CD14-positive monocyte (primary cell): ENCODE measurements at regions of chr9 and their contacts with region 1.

Region 1: DNA sequence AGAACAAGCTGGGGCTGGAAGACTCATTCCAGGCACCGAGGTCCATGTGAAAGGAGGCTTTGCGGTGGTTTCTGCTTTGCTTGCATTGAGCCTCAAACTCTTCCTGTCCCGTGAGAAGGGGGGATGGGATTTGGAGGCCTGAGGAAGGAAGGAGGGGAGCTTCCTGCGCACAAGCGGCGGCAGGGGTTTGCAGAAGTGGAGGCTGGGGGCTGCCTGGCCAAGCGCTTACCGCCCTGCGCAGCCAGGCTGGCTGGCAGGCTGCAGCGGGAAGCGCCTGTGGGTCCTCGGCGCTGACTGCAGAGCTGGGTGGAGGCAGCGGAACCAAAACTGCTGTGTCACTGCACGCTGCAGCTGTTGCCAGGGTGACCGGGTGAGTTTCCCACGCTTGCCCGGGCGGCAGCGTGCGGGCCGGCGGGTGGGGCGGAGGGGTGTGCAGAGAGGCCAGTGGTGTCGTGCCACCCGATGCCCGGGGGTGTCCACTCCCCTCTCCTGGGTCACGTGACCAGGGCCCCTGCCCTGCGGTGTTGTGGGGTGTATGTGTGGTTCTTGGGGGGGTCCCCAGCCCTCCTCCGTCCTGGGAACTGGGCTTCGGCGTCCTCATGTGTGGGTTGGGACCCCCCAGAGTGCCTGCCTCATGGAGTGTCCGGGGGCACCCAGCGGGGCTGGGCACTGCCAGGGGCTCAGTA is 81.0 kb downstream of the RXRA start:
- DNase-seq: peak; percentile 98 to 99 (median 98)
- H3K4me3 ChIP-seq: peak overlapping the region in 2 of 3 experiments; percentile 22 to 68
- H3K4me3 Mint-ChIP-seq: peak overlapping the region; percentile 69 to 85
- H3K27ac ChIP-seq: peak overlapping the region; percentile 97
- H3K27ac Mint-ChIP-seq: peak overlapping the region; percentile 90 to 100 (median 100)
- H3K4me1 ChIP-seq: peaks cover 99 to 100% of the 10 kb centered on the region in 2 donors
- H3K4me1 Mint-ChIP-seq: peaks cover 94% of the 10 kb centered on the region
- H3K27me3 ChIP-seq: no peaks in the 10 kb centered on the region
- H3K27me3 Mint-ChIP-seq: no peaks in the 10 kb centered on the region
- CTCF ChIP-seq: no peak

Region 2: DNA sequence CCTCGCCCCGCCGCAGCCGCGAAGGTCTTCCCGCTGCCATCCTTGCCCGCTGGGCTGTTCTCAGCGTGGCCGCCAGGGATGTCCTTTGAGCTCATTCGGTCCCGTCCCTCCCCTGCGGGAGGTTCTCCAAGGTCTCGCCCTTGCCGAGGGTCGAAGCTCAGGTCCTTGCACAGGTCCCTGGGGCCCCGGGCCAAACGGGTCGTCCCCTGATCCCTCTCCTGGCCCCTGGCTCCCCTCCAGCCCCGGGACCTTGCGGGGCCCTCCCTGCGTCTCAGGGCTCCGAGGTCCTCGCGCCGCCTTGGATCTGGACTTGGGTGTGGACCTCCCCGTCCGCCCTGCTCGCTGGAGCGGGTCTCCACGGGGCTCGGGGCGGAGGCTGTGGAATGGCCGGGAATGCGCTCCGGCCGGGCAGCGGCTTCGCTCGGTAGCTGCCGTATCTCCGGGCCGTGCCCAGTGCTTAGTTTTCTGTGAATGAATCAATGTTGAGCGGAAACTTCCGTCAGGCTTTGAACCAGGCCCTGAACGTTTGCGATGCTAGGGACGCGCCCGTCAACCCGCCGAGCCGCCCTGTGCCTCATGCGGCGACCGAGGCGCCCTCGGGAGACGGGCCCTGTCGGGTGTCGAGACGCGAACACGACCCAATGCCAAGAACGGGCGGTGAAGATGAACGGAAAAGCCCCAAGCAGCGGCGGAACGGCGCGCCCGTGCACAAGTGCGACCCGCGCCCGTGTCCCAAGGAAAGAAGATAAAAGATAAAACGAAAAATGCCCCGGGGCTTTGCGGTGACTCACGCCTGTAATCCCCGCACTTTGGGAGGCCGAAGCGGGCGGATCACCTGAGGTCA is 243.7 kb before region 1 on chr9:
- intact Hi-C with region 1: loop called in 1 of 2 experiments (anchors 2 kb)
- DNase-seq: peak; percentile 52 to 71 (median 58)
- H3K4me3 ChIP-seq: no peak overlapping the region
- H3K4me3 Mint-ChIP-seq: no peak overlapping the region
- H3K27ac ChIP-seq: no peak overlapping the region
- H3K27ac Mint-ChIP-seq: no peak overlapping the region
- H3K4me1 ChIP-seq: peaks cover 14 to 23% of the 10 kb centered on the region in 2 donors
- H3K4me1 Mint-ChIP-seq: peaks cover 19% of the 10 kb centered on the region
- H3K27me3 ChIP-seq: no peaks in the 10 kb centered on the region
- H3K27me3 Mint-ChIP-seq: peaks cover 2 to 3% (median 2%) of the 10 kb centered on the region in 3 donors
- CTCF ChIP-seq: peak; percentile 77

Region 3: DNA sequence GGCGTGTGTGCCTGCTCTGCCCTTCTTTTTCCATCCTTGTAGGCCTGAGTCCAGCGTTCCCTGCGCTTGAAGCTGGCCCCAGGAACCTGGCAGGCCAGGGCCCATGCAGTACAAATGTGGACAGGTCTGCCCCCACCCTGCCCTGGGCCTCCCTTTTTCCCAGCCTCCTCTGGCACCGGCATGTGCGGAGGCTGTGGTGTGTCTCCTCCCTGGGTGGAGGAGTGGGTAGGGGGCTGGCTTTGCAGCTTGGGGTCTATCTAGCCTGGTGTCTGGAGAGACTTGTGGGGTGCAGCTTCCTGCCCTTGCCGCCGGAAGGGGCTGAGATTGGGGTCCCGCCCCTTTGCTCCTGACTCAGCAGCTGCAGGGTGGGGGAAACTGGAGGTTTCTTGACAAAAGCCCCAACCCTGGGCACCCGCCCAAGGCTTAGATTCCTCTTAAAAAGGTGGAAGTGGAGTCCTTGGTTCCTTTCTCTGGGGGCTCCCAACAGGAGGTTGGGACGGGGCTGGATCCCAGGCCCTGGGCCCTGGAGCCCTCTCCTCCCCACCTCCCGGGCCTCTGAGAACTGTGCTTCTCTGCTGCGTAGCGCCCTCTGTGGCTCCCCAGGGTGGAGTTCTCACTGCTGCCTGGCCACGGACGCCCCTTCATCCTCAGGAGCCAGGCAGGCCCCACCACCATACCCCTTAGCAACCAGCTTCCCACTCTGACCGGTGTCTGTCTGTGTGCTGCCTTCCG is 63.0 kb before region 1 on chr9:
- intact Hi-C with region 1: loop called (anchors 5 kb)
- DNase-seq: peak; percentile 71 to 86 (median 78)
- H3K4me3 ChIP-seq: peak overlapping the region in 2 of 3 experiments; percentile 25 to 69
- H3K4me3 Mint-ChIP-seq: peak overlapping the region; percentile 69 to 88
- H3K27ac ChIP-seq: peak overlapping the region; percentile 93 to 97
- H3K27ac Mint-ChIP-seq: peak overlapping the region in 3 of 7 donors; percentile 97 to 98 (median 97)
- H3K4me1 ChIP-seq: peaks cover 86 to 99% of the 10 kb centered on the region in 2 donors
- H3K4me1 Mint-ChIP-seq: peaks cover 5% of the 10 kb centered on the region
- H3K27me3 ChIP-seq: no peaks in the 10 kb centered on the region
- H3K27me3 Mint-ChIP-seq: peaks cover 0 to 4% (median 2%) of the 10 kb centered on the region in 3 donors
- CTCF ChIP-seq: peak; percentile 22

Region 4: GRCh38 chr9:134371731-134372130 is 35.5 kb before region 1 on chr9:
- intact Hi-C with region 1: loop called (anchors 2 kb)
- DNase-seq: peak; percentile 99 to 100 (median 100)
- H3K4me3 ChIP-seq: no peak overlapping the region
- H3K4me3 Mint-ChIP-seq: peak overlapping the region; percentile 75 to 85
- H3K27ac ChIP-seq: peak overlapping the region; percentile 99 to 100
- H3K27ac Mint-ChIP-seq: peak overlapping the region; percentile 100
- H3K4me1 ChIP-seq: peaks cover 96 to 99% of the 10 kb centered on the region in 2 donors
- H3K4me1 Mint-ChIP-seq: peaks cover 89% of the 10 kb centered on the region
- H3K27me3 ChIP-seq: no peaks in the 10 kb centered on the region
- H3K27me3 Mint-ChIP-seq: no peaks in the 10 kb centered on the region
- CTCF ChIP-seq: no peak

Region 5: GRCh38 chr9:134381671-134382516 is 25.4 kb before region 1 on chr9:
- intact Hi-C with region 1: no loop called
- DNase-seq: peak; percentile 36 to 47 (median 44)
- H3K4me3 ChIP-seq: peak overlapping the region in 2 of 3 experiments; percentile 0 to 64
- H3K4me3 Mint-ChIP-seq: peak overlapping the region; percentile 62 to 85
- H3K27ac ChIP-seq: peak overlapping the region; percentile 33 to 70
- H3K27ac Mint-ChIP-seq: peak overlapping the region; percentile 66 to 87 (median 78)
- H3K4me1 ChIP-seq: peaks cover 100% of the 10 kb centered on the region in 2 donors
- H3K4me1 Mint-ChIP-seq: peaks cover 93% of the 10 kb centered on the region
- H3K27me3 ChIP-seq: no peaks in the 10 kb centered on the region
- H3K27me3 Mint-ChIP-seq: peaks cover 0 to 2% (median 2%) of the 10 kb centered on the region in 3 donors
- CTCF ChIP-seq: peak; percentile 89

Region 6: DNA sequence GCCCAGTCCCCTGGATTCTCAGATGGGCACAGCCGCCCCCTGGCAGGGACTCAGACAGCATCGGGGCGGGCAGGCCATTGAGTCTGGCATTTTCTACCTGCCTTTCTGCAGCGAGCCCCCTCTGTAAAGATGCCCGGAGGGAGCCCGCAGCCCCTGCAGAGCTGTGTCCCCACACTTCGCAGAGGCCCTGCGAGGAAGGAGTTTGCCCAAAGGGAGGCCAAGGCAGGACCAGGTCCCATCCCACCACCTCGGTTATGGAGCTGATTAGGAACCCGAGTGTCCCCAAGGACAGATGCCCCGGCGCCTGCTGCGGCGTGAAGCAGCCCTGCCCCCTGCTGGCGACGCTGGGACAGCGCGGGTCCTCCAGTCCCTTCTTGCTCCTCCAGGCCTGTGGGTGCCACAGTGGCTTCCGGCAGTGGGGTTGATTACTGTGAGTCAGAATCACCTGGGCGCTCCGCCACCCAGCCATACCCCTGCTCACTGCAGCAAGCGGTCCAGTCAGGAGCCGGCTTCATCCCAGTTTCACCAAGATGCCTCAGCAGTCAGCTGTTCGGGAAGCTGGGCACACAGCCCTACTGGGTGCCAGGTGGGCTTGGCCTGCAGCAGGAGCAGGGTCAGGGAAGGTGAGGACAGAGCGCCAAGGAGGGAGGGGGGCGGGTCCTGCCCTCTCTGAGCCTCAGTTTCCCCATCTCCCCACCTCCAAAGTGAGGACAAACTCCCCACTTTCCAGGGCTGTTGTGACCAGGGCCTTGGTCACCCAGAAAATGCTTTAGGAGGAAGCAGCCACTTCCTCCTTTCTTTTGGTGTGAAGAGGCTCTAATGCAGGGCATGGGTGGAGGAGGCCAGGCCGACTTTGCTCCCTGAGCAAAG is 36.1 kb after region 1 on chr9:
- intact Hi-C with region 1: loop called (anchors 2 to 5 kb)
- DNase-seq: peak; percentile 81 to 91 (median 85)
- H3K4me3 ChIP-seq: peak overlapping the region in 1 of 3 experiments; percentile 45
- H3K4me3 Mint-ChIP-seq: peak overlapping the region; percentile 20 to 55
- H3K27ac ChIP-seq: peak overlapping the region; percentile 80 to 81
- H3K27ac Mint-ChIP-seq: peak overlapping the region; percentile 77 to 90 (median 87)
- H3K4me1 ChIP-seq: peaks cover 50 to 58% of the 10 kb centered on the region in 2 donors
- H3K4me1 Mint-ChIP-seq: peaks cover 57% of the 10 kb centered on the region
- H3K27me3 ChIP-seq: no peaks in the 10 kb centered on the region
- H3K27me3 Mint-ChIP-seq: peaks cover 2 to 17% (median 5%) of the 10 kb centered on the region in 3 donors
- CTCF ChIP-seq: peak; percentile 99